Activated CD4-positive, alpha-beta T cell treated with anti-CD3 and anti-CD28 coated beads for 36 hours (primary cell): ENCODE measurements at regions of chr6 and their contacts with region 1.

Region 1: DNA sequence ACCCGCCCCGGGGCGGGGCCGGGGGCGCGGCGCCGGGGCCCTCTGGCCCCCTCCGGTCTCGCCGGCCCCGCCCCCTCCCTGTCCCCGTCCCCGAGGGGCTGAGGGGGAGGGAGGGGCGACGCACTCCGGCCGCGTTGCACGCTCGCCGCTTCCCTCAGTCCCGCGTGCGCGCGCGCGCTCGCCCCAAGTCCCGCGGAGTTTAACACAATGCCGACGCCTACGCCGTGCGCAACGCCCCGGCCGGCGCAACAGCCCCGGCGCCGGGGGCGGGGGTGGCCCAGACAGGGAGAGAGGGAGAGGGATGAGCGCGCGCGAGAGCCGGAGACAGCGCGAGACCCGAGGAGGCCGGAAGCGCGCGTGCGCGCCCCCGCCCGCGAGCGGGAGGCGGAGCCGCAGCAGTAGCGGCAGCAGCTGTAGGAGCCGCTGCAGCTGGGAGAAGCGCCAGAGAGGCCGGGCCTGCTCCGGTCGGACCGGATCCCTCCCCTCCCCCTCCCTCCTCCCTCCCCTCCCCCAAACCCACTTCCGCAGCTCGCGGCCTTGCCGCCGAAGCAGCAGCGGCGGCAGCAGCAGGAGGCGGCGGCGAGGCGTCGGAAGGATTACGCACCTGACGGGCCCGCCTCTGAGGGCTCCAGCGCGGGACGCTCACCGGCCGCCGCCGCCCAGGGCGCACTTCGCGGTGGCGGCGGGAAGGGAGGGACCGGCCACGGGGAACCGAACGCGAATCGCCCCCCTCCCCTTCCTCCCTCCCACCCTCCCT is 905 bp downstream of the ZBTB2 start:
- DNase-seq: peak; percentile 99
- ATAC-seq: peak; percentile 79
- H3K4me3 Mint-ChIP-seq: peak overlapping the region; percentile 92
- H3K27ac Mint-ChIP-seq: peak overlapping the region; percentile 31
- H3K4me1 Mint-ChIP-seq: peaks cover 51% of the 10 kb centered on the region
- H3K27me3 Mint-ChIP-seq: no peaks in the 10 kb centered on the region

Region 2: GRCh38 chr6:149565527-149566409 is 1824.7 kb before region 1 on chr6 and contains the start of gene GINM1:
- CTCF ChIA-PET with region 1: no interaction called
- POLR2A ChIA-PET with region 1: no interaction called
- intact Hi-C with region 1: loop called in 1 of 2 experiments (anchors 2 kb)
- DNase-seq: peak; percentile 97
- ATAC-seq: peak; percentile 90
- H3K4me3 Mint-ChIP-seq: peak within 1 kb of the TSS; percentile 91
- H3K27ac Mint-ChIP-seq: peak within 1 kb of the TSS; percentile 89
- H3K4me1 Mint-ChIP-seq: peaks cover 20% of the 10 kb centered on the region
- H3K27me3 Mint-ChIP-seq: no peaks in the 10 kb centered on the region
- total RNA-seq, gene GINM1: 15.9 to 17.3 TPM

Region 3: GRCh38 chr6:151240036-151240685 is 150.3 kb before region 1 on chr6:
- CTCF ChIA-PET with region 1: no interaction called
- POLR2A ChIA-PET with region 1: no interaction called
- intact Hi-C with region 1: loop called in 1 of 2 experiments (anchors 1 kb)
- DNase-seq: peak; percentile 79
- ATAC-seq: peak; percentile 92
- H3K4me3 Mint-ChIP-seq: peak overlapping the region; percentile 79
- H3K27ac Mint-ChIP-seq: no peak overlapping the region
- H3K4me1 Mint-ChIP-seq: peaks cover 3% of the 10 kb centered on the region
- H3K27me3 Mint-ChIP-seq: peaks cover 62% of the 10 kb centered on the region

Region 4: GRCh38 chr6:151409260-151409659 is 18.8 kb after region 1 on chr6:
- CTCF ChIA-PET with region 1: interaction called, 17 read pairs
- POLR2A ChIA-PET with region 1: interaction called, 3 read pairs
- intact Hi-C with region 1: loop called in 1 of 2 experiments (anchors 2 kb)
- DNase-seq: no peak
- ATAC-seq: no peak
- H3K4me3 Mint-ChIP-seq: no peak overlapping the region
- H3K27ac Mint-ChIP-seq: peak overlapping the region; percentile 17
- H3K4me1 Mint-ChIP-seq: peaks cover 22% of the 10 kb centered on the region
- H3K27me3 Mint-ChIP-seq: no peaks in the 10 kb centered on the region

Region 5: GRCh38 chr6:152301764-152302568 is 911.5 kb after region 1 on chr6:
- CTCF ChIA-PET with region 1: no interaction called
- POLR2A ChIA-PET with region 1: no interaction called
- intact Hi-C with region 1: loop called in 1 of 2 experiments (anchors 1 kb)
- DNase-seq: peak; percentile 95
- ATAC-seq: peak; percentile 92
- H3K4me3 Mint-ChIP-seq: peak overlapping the region; percentile 92
- H3K27ac Mint-ChIP-seq: peak overlapping the region; percentile 99
- H3K4me1 Mint-ChIP-seq: peaks cover 31% of the 10 kb centered on the region
- H3K27me3 Mint-ChIP-seq: no peaks in the 10 kb centered on the region